PC-9 (cell line): ENCODE measurements at regions of chr16 and their contacts with region 1.

Region 1: DNA sequence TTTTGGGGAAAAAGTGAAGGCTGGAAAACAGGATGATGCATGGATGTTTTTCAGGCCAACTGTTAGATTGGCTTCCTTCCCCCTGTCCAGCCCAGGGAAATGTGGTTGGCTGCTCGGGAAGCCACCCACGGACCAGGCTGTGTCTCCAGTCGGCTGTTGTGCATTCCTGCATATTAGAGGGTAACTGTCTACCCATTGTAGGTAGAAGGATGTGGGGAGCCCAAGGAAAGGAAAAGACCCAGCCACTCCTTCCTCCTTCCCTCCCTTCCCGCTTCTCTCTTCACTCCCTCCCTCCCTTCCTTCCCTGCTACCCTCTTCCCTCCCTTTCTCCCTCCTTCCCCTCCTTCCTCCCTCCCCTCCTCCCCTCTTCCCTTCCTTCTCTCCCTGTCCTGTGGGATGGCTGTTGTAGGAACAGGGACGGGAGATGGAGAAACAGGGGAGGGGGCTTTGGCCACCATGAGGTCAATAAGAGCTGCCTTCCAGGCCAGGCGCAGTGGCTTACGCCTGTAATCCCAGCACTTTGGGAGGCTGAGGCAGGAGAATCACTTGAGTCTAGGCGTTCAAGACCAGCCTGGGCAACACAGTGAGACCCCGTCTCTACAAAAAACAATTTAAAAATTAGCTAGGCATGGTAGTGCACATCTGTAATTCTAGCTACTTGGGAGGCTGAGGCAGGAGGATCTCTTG is 16.9 kb downstream of the SYT17 start:
- DNase-seq: no peak
- H3K4me3 ChIP-seq: no peak overlapping the region
- H3K27ac ChIP-seq: peak overlapping the region; percentile 71
- H3K4me1 ChIP-seq: peaks cover 26% of the 10 kb centered on the region
- H3K27me3 ChIP-seq: no peaks in the 10 kb centered on the region
- CTCF ChIP-seq: no peak

Region 2: GRCh38 chr16:19203374-19204031 is 18.5 kb after region 1 on chr16:
- CTCF ChIA-PET with region 1: no interaction called
- POLR2A ChIA-PET with region 1: no interaction called
- intact Hi-C with region 1: no loop called
- DNase-seq: no peak
- H3K4me3 ChIP-seq: no peak overlapping the region
- H3K27ac ChIP-seq: no peak overlapping the region
- H3K4me1 ChIP-seq: no peaks in the 10 kb centered on the region
- H3K27me3 ChIP-seq: no peaks in the 10 kb centered on the region
- CTCF ChIP-seq: no peak

Region 3: GRCh38 chr16:19269098-19269497 is 84.1 kb after region 1 on chr16:
- CTCF ChIA-PET with region 1: no interaction called
- POLR2A ChIA-PET with region 1: no interaction called
- intact Hi-C with region 1: no loop called
- DNase-seq: no peak
- H3K4me3 ChIP-seq: no peak overlapping the region
- H3K27ac ChIP-seq: no peak overlapping the region
- H3K4me1 ChIP-seq: no peaks in the 10 kb centered on the region
- H3K27me3 ChIP-seq: no peaks in the 10 kb centered on the region
- CTCF ChIP-seq: no peak

Region 4: GRCh38 chr16:19291475-19291874 is 106.5 kb after region 1 on chr16:
- CTCF ChIA-PET with region 1: no interaction called
- POLR2A ChIA-PET with region 1: interaction called, 22 read pairs
- intact Hi-C with region 1: no loop called
- DNase-seq: peak; percentile 49 to 62
- H3K4me3 ChIP-seq: no peak overlapping the region
- H3K27ac ChIP-seq: no peak overlapping the region
- H3K4me1 ChIP-seq: peaks cover 8% of the 10 kb centered on the region
- H3K27me3 ChIP-seq: no peaks in the 10 kb centered on the region
- CTCF ChIP-seq: no peak